Calu3 (cell line): ENCODE measurements at regions of chr15 and their contacts with region 1.

Region 1: GRCh38 chr15:89472785-89473256 is 23.6 kb downstream of the RHCG start:
- DNase-seq: peak; percentile 83
- H3K4me3 Mint-ChIP-seq: no peak overlapping the region
- H3K27ac Mint-ChIP-seq: no peak overlapping the region
- H3K4me1 Mint-ChIP-seq: no peaks in the 10 kb centered on the region
- H3K27me3 Mint-ChIP-seq: peaks cover 92% of the 10 kb centered on the region
- CTCF ChIP-seq: peak; percentile 91

Region 2: DNA sequence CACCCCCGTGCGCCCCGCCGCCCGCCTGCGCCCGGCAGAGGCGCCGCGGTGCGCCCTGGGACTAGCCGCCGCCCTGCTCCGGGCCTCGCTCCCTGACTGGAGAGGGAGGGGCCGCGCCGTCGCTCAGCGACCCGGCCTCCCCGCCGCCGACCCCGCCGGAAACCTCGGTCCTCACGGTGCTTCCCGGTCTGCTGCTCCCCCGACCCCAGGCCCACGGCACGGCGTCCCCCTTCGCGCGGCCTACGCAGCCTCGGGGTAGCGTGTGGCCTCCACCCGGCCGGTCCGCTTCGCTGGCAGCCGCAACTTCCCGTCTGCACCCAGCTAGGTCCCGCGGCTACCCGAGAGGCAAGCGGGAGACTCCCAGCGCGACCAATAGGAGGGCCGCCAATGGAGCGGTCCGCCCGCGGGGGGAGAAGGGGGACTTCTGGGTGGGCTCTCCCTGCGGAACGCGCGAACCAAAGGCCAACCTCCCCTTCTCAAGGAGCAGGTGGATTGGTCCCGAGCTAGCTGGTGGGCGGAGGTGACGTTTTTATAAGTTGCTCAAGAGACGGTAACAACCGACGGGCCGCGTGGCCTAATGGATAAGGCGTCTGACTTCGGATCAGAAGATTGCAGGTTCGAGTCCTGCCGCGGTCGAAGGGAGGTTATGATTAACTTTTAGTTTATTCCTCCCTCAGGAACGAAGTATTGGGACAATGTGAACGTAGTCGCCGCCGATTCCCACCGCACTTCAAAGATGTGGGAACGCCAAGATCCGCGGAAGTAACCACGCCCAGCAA is 138.1 kb before region 1 on chr15 and contains the start of gene POLG:
- CTCF ChIA-PET with region 1: interaction called, 12 read pairs
- intact Hi-C with region 1: no loop called
- DNase-seq: peak; percentile 99
- H3K4me3 Mint-ChIP-seq: peak within 1 kb of the TSS; percentile 76
- H3K27ac Mint-ChIP-seq: peak within 1 kb of the TSS; percentile 100
- H3K4me1 Mint-ChIP-seq: peaks cover 37% of the 10 kb centered on the region
- H3K27me3 Mint-ChIP-seq: peaks cover 12% of the 10 kb centered on the region
- CTCF ChIP-seq: no peak
- total RNA-seq, gene POLG: 83.6 and 92.3 TPM in 2 replicates

Region 3: GRCh38 chr15:89416141-89416853 is 56.5 kb before region 1 on chr15:
- CTCF ChIA-PET with region 1: interaction called, 3 read pairs
- intact Hi-C with region 1: loop called (anchors 5 kb)
- DNase-seq: peak; percentile 91
- H3K4me3 Mint-ChIP-seq: no peak overlapping the region
- H3K27ac Mint-ChIP-seq: no peak overlapping the region
- H3K4me1 Mint-ChIP-seq: no peaks in the 10 kb centered on the region
- H3K27me3 Mint-ChIP-seq: peaks cover 100% of the 10 kb centered on the region
- CTCF ChIP-seq: peak; percentile 98

Region 4: DNA sequence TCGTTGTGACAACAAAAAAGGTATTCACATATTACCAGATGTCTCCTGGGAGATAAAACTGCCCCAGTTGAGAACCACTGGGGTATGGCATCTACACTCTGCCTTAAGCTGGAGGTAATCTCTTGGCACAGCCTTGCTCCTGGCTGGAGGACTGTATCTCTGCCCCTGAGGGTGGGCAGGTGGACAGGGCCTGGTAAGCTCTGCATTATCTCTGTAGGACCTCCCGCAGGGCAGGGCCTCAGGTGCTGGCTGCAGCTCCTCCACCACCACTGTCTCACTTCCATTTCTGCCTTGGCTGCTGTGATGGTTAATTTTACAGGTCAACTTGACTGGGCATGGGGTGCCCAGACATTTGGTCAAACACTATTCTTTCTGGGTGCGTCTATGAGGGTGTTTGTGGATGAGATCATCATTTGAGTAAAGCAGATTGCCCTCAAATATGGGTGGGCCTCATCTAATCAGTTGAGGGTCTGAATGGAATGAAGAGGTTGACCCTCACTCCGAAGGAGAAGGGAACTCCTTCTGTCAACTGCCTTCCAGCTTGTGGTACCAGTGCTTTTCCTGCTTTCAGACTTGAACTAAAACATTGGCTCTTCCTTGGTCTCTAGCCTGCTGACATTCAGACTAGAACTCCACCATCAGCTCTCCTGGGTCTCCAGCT is 33.3 kb after region 1 on chr15:
- CTCF ChIA-PET with region 1: interaction called, 16 read pairs
- intact Hi-C with region 1: no loop called
- DNase-seq: no peak
- H3K4me3 Mint-ChIP-seq: no peak overlapping the region
- H3K27ac Mint-ChIP-seq: no peak overlapping the region
- H3K4me1 Mint-ChIP-seq: peaks cover 22% of the 10 kb centered on the region
- H3K27me3 Mint-ChIP-seq: peaks cover 13% of the 10 kb centered on the region
- CTCF ChIP-seq: no peak